Cardiac septum (tissue), 1 donor: ENCODE measurements at regions of chr4 and their contacts with region 1.

Region 1: DNA sequence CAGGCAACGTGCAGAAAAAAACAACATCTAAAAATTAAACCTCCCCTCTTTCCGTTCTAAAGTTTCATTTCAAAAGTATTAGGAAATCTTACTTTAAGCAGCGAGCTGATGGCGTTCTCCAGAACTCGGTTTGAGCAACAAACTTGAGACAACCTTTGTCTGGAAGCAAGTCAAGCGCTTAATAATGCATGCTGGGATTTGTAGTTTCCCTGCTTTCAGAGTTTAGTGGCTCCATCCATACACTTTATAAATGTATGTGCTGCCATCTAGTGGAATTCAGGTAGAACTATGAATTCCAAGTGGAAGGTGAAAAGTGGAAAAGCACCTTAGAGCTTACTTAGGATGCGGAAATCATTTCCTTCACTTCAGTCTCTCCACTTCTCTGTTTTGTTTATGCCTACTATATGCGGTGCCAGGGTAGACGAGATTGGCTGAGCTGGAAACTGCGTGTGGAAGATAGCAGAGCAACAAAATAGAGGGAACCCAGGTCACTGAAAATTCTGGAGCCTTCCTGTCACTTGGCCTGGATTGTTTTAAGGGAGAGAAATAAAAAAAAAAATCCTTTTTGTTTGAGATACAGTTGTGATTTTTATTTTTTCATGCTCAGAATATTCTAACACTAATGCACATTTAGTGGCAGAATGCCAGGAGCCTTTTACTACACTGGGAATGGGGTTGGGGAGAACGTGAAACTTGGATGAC is at the start of gene BDH2:
- DNase-seq: no peak
- total RNA-seq, gene BDH2: 21.7 TPM

Region 2: GRCh38 chr4:102036619-102037376 is 1063.0 kb before region 1 on chr4:
- intact Hi-C with region 1: no loop called
- DNase-seq: no peak

Region 3: DNA sequence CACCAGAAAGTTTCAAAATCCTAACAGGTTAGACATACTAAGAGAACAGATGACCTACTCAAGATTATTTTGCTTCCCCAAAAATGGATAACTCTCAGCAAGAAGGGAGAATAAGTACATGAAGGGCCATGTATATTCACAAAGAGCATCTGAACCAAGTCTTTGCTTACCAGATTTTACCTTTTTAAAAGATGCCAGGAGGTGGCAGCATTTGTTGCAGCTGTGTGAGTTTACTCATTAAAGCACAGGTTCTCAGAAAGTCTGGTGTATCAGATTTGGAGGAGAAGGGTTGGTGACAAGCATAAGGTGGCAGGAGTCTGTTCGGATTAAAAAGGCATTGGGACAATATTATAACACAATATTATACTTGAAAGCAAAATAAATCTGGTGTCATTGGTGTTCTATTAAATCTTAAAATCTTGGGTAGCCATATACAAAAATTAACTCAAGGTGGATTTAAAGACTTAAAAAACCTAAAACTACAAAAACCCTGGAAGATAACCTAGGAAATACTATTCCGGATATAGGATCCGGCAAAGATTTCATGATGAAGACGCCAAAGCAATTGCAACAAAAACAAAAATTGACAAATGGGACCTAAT is 650.0 kb before region 1 on chr4:
- intact Hi-C with region 1: loop called (anchors 5 kb)
- DNase-seq: no peak

Region 4: DNA sequence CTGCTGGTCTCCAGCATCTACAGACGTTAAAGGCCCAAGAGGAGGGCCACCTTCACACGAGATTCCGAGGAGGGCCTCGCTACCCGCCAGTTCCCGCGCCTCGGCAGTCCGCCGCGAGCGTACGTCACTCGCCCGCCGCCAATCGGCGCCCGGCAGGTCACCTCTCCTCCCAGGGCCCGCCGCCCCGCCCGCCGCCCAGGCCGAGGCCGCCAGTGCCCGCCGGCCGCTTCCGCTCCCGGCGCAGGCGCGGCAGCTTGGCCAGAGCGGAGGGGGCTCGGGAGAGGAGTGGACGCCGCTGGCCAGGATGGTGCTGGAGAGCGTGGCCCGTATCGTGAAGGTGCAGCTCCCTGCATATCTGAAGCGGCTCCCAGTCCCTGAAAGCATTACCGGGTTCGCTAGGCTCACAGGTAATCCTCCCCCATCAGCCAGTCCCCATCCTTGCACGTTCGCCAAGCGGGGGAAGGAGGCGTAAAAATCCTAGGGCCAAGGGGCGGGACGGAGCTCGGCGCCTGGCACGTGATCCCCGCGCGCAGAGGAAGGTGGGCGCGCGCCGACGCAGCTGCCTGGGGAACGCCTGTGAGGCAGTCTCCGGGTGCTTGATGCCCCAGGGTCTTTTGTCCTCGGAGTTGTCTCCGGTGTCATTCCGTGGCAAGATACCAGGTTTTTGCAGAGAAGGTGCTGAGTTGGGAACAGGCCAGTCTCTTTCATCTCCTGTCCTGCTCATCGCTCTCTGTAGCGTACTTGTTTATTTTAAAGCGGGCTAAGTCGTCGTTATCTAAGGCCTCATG is 230.9 kb before region 1 on chr4 and contains the start of gene CISD2:
- intact Hi-C with region 1: loop called (anchors 10 kb)
- DNase-seq: peak; percentile 97
- total RNA-seq, gene CISD2: 15.8 TPM

Region 5: DNA sequence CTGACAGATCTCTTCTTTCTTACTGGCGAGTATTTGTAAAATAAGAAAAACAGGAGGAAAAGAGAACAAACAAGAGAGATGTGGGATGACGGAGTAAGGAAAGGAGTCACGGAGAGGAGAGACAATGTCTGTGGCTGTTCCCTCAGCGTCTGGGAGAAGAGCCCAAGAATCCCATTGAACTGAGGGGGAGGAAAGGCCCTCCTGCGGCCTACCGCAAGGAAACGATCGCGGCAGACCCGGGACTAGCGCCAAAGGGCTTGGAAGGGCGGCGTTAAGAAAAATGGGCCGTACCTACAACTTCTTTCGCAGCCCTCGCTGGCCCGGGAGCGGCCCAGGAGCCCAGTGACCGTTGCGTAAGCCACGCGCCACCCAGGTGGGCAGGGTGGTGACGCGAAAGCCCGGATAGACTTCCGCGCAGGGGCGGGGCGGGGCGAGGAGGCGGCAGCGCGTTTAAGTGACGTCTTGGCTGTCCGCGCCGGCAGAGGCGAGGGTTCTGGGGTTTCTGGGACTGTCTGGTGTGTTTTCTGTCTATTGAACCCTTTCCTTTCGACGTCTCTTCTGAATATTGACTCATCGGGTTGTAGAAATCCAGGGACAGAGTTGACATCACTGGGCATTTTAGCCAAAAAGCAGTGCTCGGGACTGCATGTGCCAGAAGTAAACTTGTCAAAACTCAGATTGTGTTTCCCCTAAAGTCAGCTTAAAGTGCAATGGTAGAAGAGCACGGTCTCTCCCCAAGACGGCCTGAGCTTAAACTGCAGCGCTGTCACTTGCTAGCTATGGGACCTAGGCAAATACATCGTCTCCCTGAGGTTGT is 80.3 kb before region 1 on chr4 and contains the start of gene SLC9B1:
- intact Hi-C with region 1: loop called (anchors 5 kb)
- DNase-seq: peak; percentile 98
- total RNA-seq, gene SLC9B1: 0.86 TPM

Region 6: DNA sequence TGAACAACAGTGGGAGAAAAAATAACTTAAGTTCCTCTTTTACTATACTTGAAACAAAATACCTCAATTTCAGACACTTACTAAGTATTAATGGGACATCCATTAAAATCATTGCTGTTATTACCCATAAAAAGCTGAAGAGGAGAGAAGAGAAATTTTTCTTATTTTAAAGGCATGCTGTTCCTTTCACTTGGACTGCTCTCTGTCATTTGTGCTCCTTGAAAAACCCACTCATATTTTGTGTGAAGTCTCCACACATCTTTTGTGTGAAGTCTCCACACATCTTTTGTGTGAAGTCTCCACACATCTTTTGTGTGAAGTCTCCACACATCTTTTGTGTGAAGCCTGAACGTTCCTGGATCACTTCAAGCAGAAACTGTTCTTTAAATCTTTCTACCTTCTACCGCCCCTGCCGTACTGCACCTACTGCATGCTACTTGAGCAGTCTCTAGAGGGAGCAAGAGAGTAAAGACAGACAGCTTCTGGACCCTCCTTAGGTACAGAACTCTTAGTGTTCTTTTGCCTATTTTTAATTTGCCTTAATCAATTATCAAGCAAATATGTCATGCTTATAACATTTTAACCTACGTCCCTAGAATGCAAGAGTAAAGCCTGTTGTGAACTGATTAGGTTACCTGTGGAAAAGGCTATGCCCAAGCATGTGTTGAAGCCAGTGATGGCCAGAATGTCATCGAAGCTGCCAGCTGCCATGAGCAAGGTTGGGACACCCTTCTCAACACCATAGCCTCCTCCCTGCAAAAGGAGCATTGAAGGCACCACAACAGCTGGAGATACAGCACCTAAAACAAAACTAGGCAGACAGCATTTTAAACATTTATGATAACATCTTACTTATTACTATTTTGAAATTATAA is 53.2 kb before region 1 on chr4:
- intact Hi-C with region 1: loop called (anchors 5 kb)
- DNase-seq: no peak